Colonic mucosa (tissue), 4 donors: ENCODE measurements at regions of chr14 and their contacts with region 1.

Region 1: DNA sequence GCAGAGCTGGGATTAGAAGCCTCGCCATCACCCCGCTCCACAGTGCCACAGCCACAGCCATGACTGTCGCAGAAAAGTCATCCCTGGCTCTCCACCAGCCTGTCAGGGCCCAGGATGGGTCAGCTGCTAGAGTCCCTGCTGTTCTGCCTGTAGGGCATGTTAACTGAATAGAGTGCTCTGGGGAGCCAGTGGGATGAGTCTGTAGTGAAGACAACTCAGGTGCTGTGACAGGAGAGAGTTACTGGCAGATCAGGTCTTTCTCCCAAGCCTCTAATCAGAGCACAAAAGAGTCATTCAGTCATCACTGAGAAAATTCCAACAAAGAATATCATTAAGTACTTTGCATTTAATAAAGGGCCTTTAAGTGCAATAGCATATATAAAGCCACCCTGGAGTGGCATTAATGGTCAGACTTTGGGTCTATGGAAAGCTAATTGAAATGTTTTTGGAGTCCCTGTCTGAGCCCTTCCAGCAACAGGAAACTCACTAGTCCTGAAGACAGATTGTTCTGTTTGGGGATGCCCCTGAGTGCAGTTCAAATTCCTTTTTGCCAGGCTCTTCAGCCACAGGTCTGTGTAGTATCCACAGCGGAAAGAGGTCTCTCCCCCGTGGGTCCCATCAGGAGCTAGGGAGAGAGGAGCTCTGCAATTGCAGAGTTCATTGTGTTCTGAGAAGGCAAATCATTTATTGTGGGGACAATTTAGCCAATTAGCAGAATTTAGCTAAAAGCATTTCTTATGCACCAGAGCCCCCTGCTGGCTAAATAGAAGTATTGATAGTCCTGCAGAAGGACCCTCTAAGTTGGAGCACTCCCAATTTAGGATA is 45.2 kb upstream of the C14orf132 start:
- DNase-seq: peak; percentile 21
- H3K4me3 ChIP-seq: no peak overlapping the region
- H3K27ac ChIP-seq: no peak overlapping the region
- H3K4me1 ChIP-seq: no peaks in the 10 kb centered on the region
- H3K27me3 ChIP-seq: no peaks in the 10 kb centered on the region
- CTCF ChIP-seq: peak; percentile 63

Region 2: GRCh38 chr14:96275177-96276112 is 281.5 kb after region 1 on chr14:
- intact Hi-C with region 1: loop called (anchors 10 kb)
- DNase-seq: peak; percentile 80
- H3K4me3 ChIP-seq: no peak overlapping the region
- H3K27ac ChIP-seq: no peak overlapping the region
- H3K4me1 ChIP-seq: no peaks in the 10 kb centered on the region
- H3K27me3 ChIP-seq: no peaks in the 10 kb centered on the region
- CTCF ChIP-seq: peak; percentile 94